Activated T-helper 1 cell treated with anti-CD3 and anti-CD28 coated beads, Interleukin-12 subunit alpha, Interleukin-12 subunit beta, Interleukin-2, Interleukin-4 antibody, amounts not matched to agents 30 ng/mL and 10 ng/mL and 1 ng/mL, durations not matched to agents 14 hours and 24 hours and 36 hours (primary cell): ENCODE measurements at regions of chr12 and their contacts with region 1.

Region 1: GRCh38 chr12:27821259-27821973 is 41.4 kb upstream of the MANSC4 start:
- DNase-seq: peak; percentile 33
- H3K4me3 Mint-ChIP-seq: peak overlapping the region; percentile 32
- H3K27ac Mint-ChIP-seq: peak overlapping the region; percentile 91
- H3K4me1 Mint-ChIP-seq: peaks cover 71% of the 10 kb centered on the region
- H3K27me3 Mint-ChIP-seq: peaks cover 22% of the 10 kb centered on the region

Region 2: GRCh38 chr12:26767116-26767515 is 1054.3 kb before region 1 on chr12:
- intact Hi-C with region 1: no loop called
- DNase-seq: no peak
- H3K4me3 Mint-ChIP-seq: no peak overlapping the region
- H3K27ac Mint-ChIP-seq: no peak overlapping the region
- H3K4me1 Mint-ChIP-seq: peaks cover 32% of the 10 kb centered on the region
- H3K27me3 Mint-ChIP-seq: no peaks in the 10 kb centered on the region

Region 3: GRCh38 chr12:26937875-26938700 is 883.3 kb before region 1 on chr12 and contains the starts of genes FGFR1OP2 and INTS13:
- intact Hi-C with region 1: loop called (anchors 5 kb)
- DNase-seq: peak; percentile 97
- H3K4me3 Mint-ChIP-seq: peak within 1 kb of the TSS; percentile 96
- H3K27ac Mint-ChIP-seq: peak within 1 kb of the TSS; percentile 96
- H3K4me1 Mint-ChIP-seq: peaks cover 82% of the 10 kb centered on the region
- H3K27me3 Mint-ChIP-seq: no peaks in the 10 kb centered on the region
- total RNA-seq, gene FGFR1OP2: 48.3 and 49.9 TPM in 2 replicates
- total RNA-seq, gene INTS13: 43.8 and 52.2 TPM in 2 replicates

Region 4: GRCh38 chr12:26963413-26963812 is 858.0 kb before region 1 on chr12:
- intact Hi-C with region 1: no loop called
- DNase-seq: no peak
- H3K4me3 Mint-ChIP-seq: no peak overlapping the region
- H3K27ac Mint-ChIP-seq: no peak overlapping the region
- H3K4me1 Mint-ChIP-seq: no peaks in the 10 kb centered on the region
- H3K27me3 Mint-ChIP-seq: no peaks in the 10 kb centered on the region

Region 5: GRCh38 chr12:27462151-27462694 is 359.2 kb before region 1 on chr12:
- intact Hi-C with region 1: loop called (anchors 2 kb)
- DNase-seq: no peak
- H3K4me3 Mint-ChIP-seq: peak overlapping the region; percentile 53
- H3K27ac Mint-ChIP-seq: peak overlapping the region; percentile 84
- H3K4me1 Mint-ChIP-seq: peaks cover 69% of the 10 kb centered on the region
- H3K27me3 Mint-ChIP-seq: no peaks in the 10 kb centered on the region

Region 6: GRCh38 chr12:27549801-27550652 is 271.4 kb before region 1 on chr12:
- intact Hi-C with region 1: no loop called
- DNase-seq: no peak
- H3K4me3 Mint-ChIP-seq: no peak overlapping the region
- H3K27ac Mint-ChIP-seq: no peak overlapping the region
- H3K4me1 Mint-ChIP-seq: peaks cover 48% of the 10 kb centered on the region
- H3K27me3 Mint-ChIP-seq: peaks cover 6% of the 10 kb centered on the region

Region 7: DNA sequence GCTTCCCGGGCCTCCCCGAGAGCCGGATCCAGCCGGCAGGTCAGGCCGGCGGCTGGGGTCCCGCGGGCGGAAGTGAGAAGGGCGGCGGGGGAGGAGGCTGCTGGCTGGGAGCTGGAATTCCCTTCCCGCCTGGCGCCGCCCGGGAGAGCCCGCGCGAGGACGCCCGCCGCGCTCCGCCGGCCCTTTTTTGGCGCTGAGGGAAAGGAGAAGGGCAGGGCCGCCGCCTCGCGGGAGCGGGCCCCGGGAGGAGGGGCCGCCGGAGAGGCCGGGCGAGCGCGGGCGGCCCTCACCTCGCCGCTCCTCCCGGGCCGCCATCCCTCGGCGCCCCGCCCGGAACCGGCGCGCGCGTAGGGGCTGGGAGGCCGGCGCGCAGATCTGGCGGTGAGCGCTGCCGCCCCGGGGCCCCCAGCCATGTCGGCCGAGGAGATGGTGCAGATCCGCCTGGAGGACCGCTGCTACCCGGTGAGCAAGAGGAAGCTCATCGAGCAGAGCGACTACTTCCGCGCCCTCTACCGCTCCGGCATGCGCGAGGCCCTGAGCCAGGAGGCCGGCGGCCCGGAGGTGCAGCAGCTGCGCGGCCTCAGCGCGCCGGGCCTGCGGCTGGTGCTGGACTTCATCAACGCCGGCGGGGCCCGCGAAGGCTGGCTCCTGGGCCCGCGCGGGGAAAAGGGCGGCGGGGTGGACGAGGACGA is 41.4 kb before region 1 on chr12 and contains the starts of genes KLHL42 and MANSC4:
- intact Hi-C with region 1: loop called (anchors 1 kb)
- DNase-seq: peak; percentile 62
- H3K4me3 Mint-ChIP-seq: peak within 1 kb of the TSS; percentile 84
- H3K27ac Mint-ChIP-seq: peak within 1 kb of the TSS; percentile 75
- H3K4me1 Mint-ChIP-seq: peaks cover 30% of the 10 kb centered on the region
- H3K27me3 Mint-ChIP-seq: peaks cover 19% of the 10 kb centered on the region
- total RNA-seq, gene KLHL42: 19.5 and 21.7 TPM in 2 replicates
- total RNA-seq, gene MANSC4: not detected in 2 replicates

Region 8: DNA sequence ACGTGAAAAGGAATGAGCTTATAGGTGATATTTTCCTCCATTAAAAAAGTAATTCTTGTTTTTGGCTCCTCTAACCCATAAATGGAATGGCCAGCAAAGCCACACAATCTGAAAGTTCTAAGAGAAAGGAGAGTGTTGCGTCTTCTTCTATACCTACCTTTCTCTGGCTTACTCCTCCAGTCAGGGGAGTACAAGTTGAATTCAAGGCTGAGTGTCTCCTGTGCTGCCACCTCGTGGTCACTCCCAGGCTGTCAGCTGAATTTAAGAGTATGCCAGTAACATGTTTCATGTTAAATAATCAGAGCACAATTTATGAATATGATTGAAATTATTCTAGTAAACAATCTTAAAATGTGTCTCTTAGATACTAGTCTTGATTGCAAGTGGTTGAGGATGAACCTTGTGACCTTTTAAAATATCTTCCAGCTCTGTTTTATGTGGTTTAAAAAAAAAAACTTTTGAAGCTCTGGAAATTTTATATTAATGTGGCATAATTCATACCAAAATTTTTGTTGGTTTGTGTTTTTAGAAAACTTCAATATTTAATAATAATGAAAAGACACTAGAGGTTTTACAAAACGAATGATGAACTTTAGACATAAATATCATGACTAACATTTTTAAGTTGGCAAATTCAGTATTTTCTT is 119.5 kb after region 1 on chr12:
- intact Hi-C with region 1: loop called (anchors 1 kb)
- DNase-seq: peak; percentile 48
- H3K4me3 Mint-ChIP-seq: no peak overlapping the region
- H3K27ac Mint-ChIP-seq: no peak overlapping the region
- H3K4me1 Mint-ChIP-seq: peaks cover 6% of the 10 kb centered on the region
- H3K27me3 Mint-ChIP-seq: peaks cover 18% of the 10 kb centered on the region

Region 9: GRCh38 chr12:28497889-28498411 is 676.5 kb after region 1 on chr12:
- intact Hi-C with region 1: loop called (anchors 1 kb)
- DNase-seq: no peak
- H3K4me3 Mint-ChIP-seq: no peak overlapping the region
- H3K27ac Mint-ChIP-seq: no peak overlapping the region
- H3K4me1 Mint-ChIP-seq: peaks cover 12% of the 10 kb centered on the region
- H3K27me3 Mint-ChIP-seq: no peaks in the 10 kb centered on the region